GM10248 (cell line): ENCODE measurements at regions of chr11 and their contacts with region 1.

Region 1: GRCh38 chr11:17978553-17979287 is 34.1 kb downstream of the SERGEF start:
- DNase-seq: peak; percentile 49
- CTCF ChIP-seq: peak; percentile 68

Region 2: DNA sequence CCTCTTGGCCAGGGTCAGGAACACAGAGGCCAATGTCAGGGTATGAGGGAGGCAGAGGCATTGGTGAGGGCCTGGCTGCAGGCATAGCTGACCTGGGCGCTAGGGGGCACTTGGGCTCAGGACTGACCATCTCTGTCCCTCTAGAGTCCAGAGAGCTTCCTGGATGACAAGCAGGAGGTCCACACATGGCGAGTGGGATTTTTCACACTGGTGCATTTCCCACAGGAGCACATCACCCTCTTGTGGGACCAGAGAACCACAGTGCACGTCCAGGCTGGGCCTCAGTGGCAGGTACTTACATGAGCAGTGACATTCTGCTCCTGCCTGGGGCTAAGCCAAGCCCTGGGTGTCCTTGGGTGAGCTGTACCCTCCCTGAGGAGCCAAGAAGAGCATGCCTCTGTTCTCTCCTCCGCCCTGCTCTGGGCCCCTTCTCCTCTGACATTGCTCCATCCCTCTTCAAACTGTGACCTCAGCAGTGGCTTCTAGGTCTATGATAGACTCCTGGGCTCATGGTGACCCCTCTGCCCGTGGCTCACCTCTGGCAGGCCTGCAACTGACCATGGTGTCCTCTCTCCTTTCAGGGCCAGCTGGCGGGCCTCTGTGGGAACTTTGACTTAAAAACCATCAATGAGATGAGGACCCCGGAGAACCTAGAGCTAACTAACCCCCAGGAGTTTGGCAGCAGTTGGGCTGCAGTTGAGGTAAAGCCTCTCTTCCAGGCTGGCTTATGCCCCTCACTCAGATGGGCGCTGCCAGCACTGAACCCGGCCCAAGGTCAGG is 385.1 kb before region 1 on chr11:
- CTCF ChIA-PET with region 1: interaction called, 30 read pairs
- POLR2A ChIA-PET with region 1: no interaction called
- DNase-seq: no peak
- CTCF ChIP-seq: no peak

Region 3: DNA sequence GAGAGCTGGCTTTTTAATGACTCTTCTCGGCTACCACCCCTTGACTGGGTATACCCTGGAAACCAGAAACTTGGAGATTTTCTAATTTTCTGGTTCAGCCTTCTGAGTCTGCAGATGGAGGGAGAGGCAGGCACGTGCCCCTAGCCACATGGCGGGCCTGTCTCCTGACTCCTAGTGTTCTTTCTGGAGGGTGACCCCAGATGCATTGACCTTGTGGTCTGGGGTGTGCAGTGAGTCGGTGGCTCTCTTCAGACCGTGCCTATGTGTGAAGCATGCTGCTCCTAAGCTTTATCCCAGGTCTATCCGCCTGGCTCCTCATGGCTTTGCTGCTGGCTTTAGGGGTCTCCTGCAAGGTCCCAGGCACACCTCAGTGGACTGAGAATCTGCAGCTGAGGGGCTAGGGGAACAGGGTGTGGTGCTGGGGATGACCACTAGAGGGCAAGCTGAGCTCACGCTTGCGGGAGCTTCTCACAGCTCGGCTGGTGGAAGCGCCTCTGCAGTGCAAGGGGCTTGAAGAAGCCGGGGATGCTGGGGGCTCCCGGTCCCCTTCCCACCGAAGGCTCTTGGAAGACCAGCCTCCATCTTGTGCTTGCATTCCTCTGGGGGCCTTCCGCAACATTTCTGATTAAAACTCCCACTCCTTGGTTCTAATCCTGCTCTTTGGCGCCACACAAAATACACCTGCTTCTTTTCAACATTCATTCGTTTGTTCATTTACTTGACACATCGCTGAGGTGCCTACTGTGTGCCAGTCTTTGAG is 379.8 kb before region 1 on chr11:
- CTCF ChIA-PET with region 1: interaction called, 30 read pairs
- POLR2A ChIA-PET with region 1: no interaction called
- DNase-seq: peak; percentile 79
- CTCF ChIP-seq: peak; percentile 99

Region 4: DNA sequence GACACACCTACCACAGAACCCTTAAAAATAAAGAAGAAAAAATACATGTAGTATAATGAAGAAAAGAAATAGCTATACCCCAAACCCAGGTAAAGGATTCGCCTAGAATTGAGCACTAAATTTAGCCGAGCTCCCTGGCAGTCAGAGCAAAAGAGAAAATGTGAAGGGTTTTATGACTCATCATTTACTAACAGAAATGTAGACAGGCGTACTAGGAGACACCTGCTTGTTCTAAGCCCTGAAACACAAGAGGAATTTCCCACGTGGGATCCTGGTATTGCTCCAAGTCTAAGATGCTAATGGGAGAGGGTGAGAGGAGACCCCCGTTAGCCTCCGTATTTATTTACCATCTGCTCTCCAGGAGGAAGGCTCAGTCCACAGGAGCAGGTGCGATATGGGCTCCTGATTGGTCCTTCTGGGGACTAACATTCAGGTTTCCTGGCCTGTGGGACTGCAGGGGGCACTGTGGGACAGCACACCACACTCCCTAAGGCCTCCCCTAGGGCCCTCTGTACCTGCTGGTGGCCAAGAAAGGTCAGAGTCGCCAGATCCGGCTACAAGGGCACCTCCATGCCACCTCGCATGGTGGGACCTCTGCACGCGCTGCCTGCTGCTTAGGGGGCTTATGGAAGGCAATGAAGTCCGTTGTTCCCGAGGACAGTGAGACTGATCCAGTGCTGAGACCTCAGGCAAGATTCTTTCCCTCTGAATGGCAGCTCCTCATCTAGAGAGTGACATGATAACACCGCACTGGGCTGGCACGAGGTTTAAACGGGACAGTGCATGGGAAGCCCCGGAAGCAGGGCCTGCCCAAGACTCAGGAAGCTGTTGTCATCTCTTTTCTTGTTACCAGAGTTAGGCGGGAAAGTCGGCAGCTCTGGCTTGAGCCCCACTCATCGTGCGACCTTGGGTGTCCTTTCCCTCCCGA is 218.4 kb before region 1 on chr11:
- CTCF ChIA-PET with region 1: interaction called, 91 read pairs
- POLR2A ChIA-PET with region 1: no interaction called
- DNase-seq: peak; percentile 76
- CTCF ChIP-seq: peak; percentile 53

Region 5: GRCh38 chr11:17960091-17960490 is 18.6 kb before region 1 on chr11:
- CTCF ChIA-PET with region 1: interaction called, 93 read pairs
- POLR2A ChIA-PET with region 1: no interaction called
- DNase-seq: no peak
- CTCF ChIP-seq: no peak

Region 6: DNA sequence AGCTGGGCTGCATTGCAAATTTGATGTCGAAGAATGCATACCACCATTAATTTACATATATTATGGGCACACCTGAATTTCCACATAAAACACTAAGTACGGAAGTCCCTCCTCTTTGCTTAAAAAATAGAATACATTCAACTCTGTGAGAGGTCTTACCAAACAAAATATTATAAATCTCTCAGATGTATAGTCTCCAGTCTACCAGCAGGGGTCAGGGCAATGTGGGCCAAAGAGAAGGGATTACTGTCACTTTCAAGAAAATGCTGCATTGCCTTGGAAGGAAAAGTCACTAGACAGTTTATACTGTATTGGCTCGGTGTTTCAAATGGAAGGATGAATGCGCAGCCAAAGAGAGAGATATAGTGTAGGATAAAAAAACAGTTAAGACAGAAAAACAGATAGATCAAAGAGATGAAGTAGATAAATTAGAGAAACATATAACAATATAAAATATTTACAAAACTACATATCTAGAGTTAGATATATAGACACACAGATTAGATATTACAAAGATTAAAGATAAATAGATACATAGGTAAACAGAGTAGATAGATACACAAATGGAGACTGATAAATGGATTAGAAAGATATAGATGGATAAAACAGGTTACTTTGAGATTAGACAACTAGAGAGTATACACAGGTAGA is 13.2 kb after region 1 on chr11:
- CTCF ChIA-PET with region 1: interaction called, 97 read pairs
- POLR2A ChIA-PET with region 1: no interaction called
- DNase-seq: peak; percentile 69
- CTCF ChIP-seq: peak; percentile 66